Activated CD4-positive, alpha-beta T cell treated with anti-CD3 and anti-CD28 coated beads, Interleukin-2, amount 10 ng/mL, durations not matched to agents 7 days and 5 days (primary cell): ENCODE measurements at regions of chr17 and their contacts with region 1.

Region 1: DNA sequence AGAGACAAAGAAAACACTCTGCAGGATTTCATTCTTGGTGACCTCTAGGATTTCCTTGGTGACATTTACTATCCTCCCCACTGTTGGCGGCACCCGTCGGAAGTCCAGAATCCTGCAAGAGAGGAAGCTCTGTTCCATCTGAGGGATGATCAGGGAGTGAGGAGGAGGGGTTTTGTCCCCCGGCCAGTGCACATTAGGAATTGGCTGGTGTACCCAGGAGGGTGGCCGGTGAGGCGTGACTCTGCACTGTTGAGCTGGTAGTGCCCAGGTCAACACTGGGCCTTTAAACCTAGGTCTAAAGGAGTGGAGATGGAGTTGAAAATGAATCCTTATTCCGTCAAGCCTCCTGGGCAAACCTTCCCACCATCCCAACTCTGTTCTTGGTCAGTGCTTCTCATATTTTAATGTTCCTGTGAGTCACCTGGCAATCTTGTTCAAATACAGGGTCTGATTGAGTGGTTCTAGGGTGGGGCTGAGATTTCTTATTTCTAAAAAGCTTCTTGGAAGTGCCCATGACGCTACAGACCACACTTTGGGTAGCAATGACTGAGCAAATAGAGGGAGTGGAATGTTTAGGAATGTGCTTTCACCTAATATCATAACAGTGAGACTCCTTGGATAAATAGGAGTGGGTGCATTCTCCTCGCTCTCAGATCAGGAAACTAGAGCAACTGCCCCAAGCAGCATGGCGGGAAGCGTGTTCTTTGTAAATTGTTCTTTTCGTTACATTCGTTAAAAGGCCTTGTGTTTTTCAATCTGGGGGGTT is 30.7 kb downstream of the PRKAR1A start:
- DNase-seq: no peak
- H3K4me3 Mint-ChIP-seq: no peak overlapping the region
- H3K27ac Mint-ChIP-seq: no peak overlapping the region
- H3K4me1 Mint-ChIP-seq: no peaks in the 10 kb centered on the region
- H3K27me3 Mint-ChIP-seq: no peaks in the 10 kb centered on the region

Region 2: GRCh38 chr17:68386240-68387087 is 156.4 kb before region 1 on chr17:
- CTCF ChIA-PET with region 1: no interaction called
- POLR2A ChIA-PET with region 1: no interaction called
- DNase-seq: no peak
- H3K4me3 Mint-ChIP-seq: no peak overlapping the region
- H3K27ac Mint-ChIP-seq: peak overlapping the region; percentile 22
- H3K4me1 Mint-ChIP-seq: peaks cover 28% of the 10 kb centered on the region
- H3K27me3 Mint-ChIP-seq: no peaks in the 10 kb centered on the region

Region 3: DNA sequence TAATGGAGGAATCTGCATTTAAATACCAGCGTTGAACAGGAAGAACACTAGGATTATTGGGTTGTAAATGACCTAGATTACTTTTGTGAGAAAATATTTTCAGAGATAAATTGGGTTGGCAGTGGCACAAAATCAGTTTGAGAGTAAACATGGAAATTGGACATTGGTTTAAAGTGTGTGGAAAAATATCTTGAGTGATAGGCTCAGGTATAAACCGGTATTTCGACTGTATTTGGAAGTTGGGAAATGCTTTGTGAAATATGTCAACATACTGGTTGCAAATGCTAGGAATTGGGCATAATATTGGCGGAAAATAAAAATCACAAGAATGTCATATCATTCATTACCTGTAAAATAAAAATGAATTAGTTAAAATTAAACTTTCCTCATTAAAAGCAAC is 15.6 kb before region 1 on chr17:
- CTCF ChIA-PET with region 1: no interaction called
- POLR2A ChIA-PET with region 1: no interaction called
- DNase-seq: no peak
- H3K4me3 Mint-ChIP-seq: no peak overlapping the region
- H3K27ac Mint-ChIP-seq: no peak overlapping the region
- H3K4me1 Mint-ChIP-seq: peaks cover 3% of the 10 kb centered on the region
- H3K27me3 Mint-ChIP-seq: no peaks in the 10 kb centered on the region

Region 4: GRCh38 chr17:68599091-68599490 is 56.2 kb after region 1 on chr17:
- CTCF ChIA-PET with region 1: no interaction called
- POLR2A ChIA-PET with region 1: interaction called, 10 read pairs
- DNase-seq: no peak
- H3K4me3 Mint-ChIP-seq: no peak overlapping the region
- H3K27ac Mint-ChIP-seq: no peak overlapping the region
- H3K4me1 Mint-ChIP-seq: peaks cover 26% of the 10 kb centered on the region
- H3K27me3 Mint-ChIP-seq: peaks cover 74% of the 10 kb centered on the region